Panc1 (cell line): ENCODE measurements at regions of chr19 and their contacts with region 1.

Region 1: DNA sequence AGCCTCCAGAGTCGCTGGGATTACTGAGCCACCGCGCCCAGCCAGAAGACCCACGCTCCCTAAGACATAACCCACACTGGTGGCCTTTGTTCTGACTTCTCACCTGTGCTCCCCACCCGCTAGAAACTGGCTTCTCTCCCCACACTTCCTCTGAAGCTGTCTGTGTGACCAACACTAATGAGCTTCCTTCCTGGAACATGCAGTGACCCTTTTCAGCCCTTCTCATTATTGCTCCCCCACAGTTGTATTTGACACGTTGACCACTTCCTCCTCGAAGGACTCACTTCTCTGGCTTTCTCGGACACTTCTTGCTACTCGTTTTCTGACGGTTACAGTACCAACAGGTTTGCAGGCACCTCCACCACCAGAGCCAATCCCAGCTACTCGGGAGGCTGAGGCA is 10.9 kb downstream of the NCR1 start:
- DNase-seq: no peak
- ATAC-seq: no peak
- H3K4me3 ChIP-seq: no peak overlapping the region
- H3K27ac ChIP-seq: no peak overlapping the region
- H3K4me1 ChIP-seq: no peaks in the 10 kb centered on the region
- H3K27me3 ChIP-seq: no peaks in the 10 kb centered on the region
- CTCF ChIP-seq: no peak

Region 2: GRCh38 chr19:54630782-54631181 is 286.0 kb before region 1 on chr19:
- CTCF ChIA-PET with region 1: no interaction called
- POLR2A ChIA-PET with region 1: interaction called, 10 read pairs
- in situ Hi-C with region 1: no loop called
- intact Hi-C with region 1: no loop called
- DNase-seq: no peak
- ATAC-seq: no peak
- H3K4me3 ChIP-seq: no peak overlapping the region
- H3K27ac ChIP-seq: no peak overlapping the region
- H3K4me1 ChIP-seq: no peaks in the 10 kb centered on the region
- H3K27me3 ChIP-seq: peaks cover 16% of the 10 kb centered on the region
- CTCF ChIP-seq: no peak

Region 3: GRCh38 chr19:54882758-54883157 is 34.1 kb before region 1 on chr19:
- CTCF ChIA-PET with region 1: interaction called, 14 read pairs
- POLR2A ChIA-PET with region 1: interaction called, 5 read pairs
- in situ Hi-C with region 1: no loop called
- intact Hi-C with region 1: no loop called
- DNase-seq: no peak
- ATAC-seq: peak; percentile 70
- H3K4me3 ChIP-seq: no peak overlapping the region
- H3K27ac ChIP-seq: no peak overlapping the region
- H3K4me1 ChIP-seq: no peaks in the 10 kb centered on the region
- H3K27me3 ChIP-seq: peaks cover 8% of the 10 kb centered on the region
- CTCF ChIP-seq: no peak

Region 4: DNA sequence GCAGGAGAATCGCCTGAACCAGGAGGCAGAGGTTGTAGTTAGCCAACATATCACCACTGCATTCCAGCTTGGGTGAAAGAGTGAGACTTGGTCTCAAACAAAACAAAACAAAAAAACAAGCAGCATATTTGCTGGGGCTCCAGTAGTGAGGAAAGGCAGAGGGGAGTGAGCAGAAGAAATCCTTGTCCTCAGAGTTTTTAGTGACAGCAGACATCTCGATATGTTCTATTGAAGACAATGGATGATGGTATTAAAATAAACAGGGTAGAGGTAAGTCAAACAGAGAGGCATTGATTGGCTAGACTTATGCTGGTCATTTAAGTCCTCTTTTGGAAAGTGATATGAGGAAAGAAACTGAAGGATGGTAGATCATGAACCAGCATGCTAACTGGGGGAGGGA is 11.5 kb after region 1 on chr19:
- CTCF ChIA-PET with region 1: interaction called, 12 read pairs
- POLR2A ChIA-PET with region 1: no interaction called
- in situ Hi-C with region 1: no loop called
- intact Hi-C with region 1: no loop called
- DNase-seq: no peak
- ATAC-seq: no peak
- H3K4me3 ChIP-seq: no peak overlapping the region
- H3K27ac ChIP-seq: no peak overlapping the region
- H3K4me1 ChIP-seq: no peaks in the 10 kb centered on the region
- H3K27me3 ChIP-seq: no peaks in the 10 kb centered on the region
- CTCF ChIP-seq: no peak

Region 5: GRCh38 chr19:55241143-55242088 is 324.6 kb after region 1 on chr19:
- CTCF ChIA-PET with region 1: no interaction called
- POLR2A ChIA-PET with region 1: no interaction called
- in situ Hi-C with region 1: no loop called
- intact Hi-C with region 1: no loop called
- DNase-seq: no peak
- ATAC-seq: peak; percentile 9; the same call in 1 of the 2 replicates
- H3K4me3 ChIP-seq: no peak overlapping the region
- H3K27ac ChIP-seq: no peak overlapping the region
- H3K4me1 ChIP-seq: no peaks in the 10 kb centered on the region
- H3K27me3 ChIP-seq: no peaks in the 10 kb centered on the region
- CTCF ChIP-seq: no peak